ENCODE measurements at regions of chr17 and their contacts with region 1.

Region 1: DNA sequence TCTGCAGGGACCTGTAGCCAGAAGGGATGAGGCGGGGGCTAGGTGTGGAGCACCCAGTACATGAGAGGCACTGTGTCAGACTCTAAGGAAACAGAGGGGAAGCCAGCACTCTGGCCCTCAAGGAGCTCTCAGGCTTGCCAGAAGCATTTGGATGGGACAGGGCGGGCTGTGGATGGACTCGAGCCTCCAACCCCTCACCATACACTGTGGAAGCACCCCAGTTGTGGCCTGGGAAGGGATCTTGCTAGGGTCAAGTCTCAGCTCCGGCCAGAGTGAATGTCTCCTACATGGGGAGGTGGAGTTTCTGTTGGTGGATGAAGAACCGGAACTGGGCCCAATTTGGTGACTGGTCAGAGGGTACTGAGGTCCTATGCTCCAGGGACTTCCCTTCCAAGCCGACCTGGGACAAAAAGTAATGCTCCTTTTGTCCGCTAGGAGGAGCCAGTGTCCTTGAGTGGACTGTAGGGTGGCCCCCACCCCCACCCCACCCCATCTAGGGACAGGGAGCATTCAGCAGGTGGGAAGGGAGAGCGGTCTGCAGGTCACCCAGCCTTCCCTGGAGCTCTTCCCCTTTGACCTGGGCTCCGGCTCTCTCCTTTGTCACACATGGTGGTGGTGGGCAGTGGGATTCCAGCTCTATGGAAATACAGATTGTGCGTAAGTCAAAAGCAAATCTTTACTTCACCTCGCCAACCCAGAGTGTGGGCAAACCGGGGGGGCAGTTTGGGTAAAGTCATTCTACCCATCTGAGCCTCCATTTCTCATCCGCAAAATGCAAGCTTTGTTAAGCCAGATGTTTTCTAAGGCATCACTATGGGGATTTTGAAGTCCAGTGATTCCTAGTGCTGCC is 20.4 kb upstream of the PHB1 start:
- DNase-seq: peak in 1 of 5 donors; percentile 19
- ATAC-seq: peak; percentile 53 to 76 (median 66)
- H3K4me3 ChIP-seq: no peak overlapping the region
- H3K27ac ChIP-seq: no peak overlapping the region
- H3K4me1 ChIP-seq: no peaks in the 10 kb centered on the region
- H3K27me3 ChIP-seq: peaks cover 2 to 30% (median 19%) of the 10 kb centered on the region in 9 donors
- CTCF ChIP-seq: peak; percentile 53 to 80 (median 73)
- POLR2A ChIP-seq: no peak

Region 2: GRCh38 chr17:49472527-49472926 is 37.5 kb after region 1 on chr17:
- intact Hi-C with region 1: loop called in 1 of 10 experiments (anchors 2 kb)
- DNase-seq: peak in 3 of 5 donors; percentile 32 to 51 (median 38)
- ATAC-seq: peak in 2 of 4 donors; percentile 13 to 48
- H3K4me3 ChIP-seq: no peak overlapping the region
- H3K27ac ChIP-seq: no peak overlapping the region
- H3K4me1 ChIP-seq: peaks cover 0 to 34% (median 17%) of the 10 kb centered on the region in 12 donors
- H3K27me3 ChIP-seq: peaks cover 0 to 49% (median 13%) of the 10 kb centered on the region in 9 donors
- CTCF ChIP-seq: no peak
- POLR2A ChIP-seq: no peak

Measured in heart left ventricle (tissue), 16 donors.